ENCODE measurements at regions of chr1 and their contacts with region 1.

Region 1: GRCh38 chr1:99180343-99180808 is 83.9 kb upstream of the PLPPR4 start:
- DNase-seq: peak; percentile 90
- ATAC-seq: peak; percentile 79
- H3K4me3 ChIP-seq: no peak overlapping the region
- H3K27ac ChIP-seq: no peak overlapping the region
- H3K4me1 ChIP-seq: peaks cover 13% of the 10 kb centered on the region
- H3K27me3 ChIP-seq: no peaks in the 10 kb centered on the region
- CTCF ChIP-seq: peak; percentile 92

Region 2: GRCh38 chr1:98794196-98794886 is 386.0 kb before region 1 on chr1:
- CTCF ChIA-PET with region 1: no interaction called
- POLR2A ChIA-PET with region 1: no interaction called
- intact Hi-C with region 1: loop called (anchors 2 kb)
- DNase-seq: peak; percentile 88
- ATAC-seq: peak; percentile 68
- H3K4me3 ChIP-seq: no peak overlapping the region
- H3K27ac ChIP-seq: no peak overlapping the region
- H3K4me1 ChIP-seq: peaks cover 32% of the 10 kb centered on the region
- H3K27me3 ChIP-seq: no peaks in the 10 kb centered on the region
- CTCF ChIP-seq: peak; percentile 91

Region 3: DNA sequence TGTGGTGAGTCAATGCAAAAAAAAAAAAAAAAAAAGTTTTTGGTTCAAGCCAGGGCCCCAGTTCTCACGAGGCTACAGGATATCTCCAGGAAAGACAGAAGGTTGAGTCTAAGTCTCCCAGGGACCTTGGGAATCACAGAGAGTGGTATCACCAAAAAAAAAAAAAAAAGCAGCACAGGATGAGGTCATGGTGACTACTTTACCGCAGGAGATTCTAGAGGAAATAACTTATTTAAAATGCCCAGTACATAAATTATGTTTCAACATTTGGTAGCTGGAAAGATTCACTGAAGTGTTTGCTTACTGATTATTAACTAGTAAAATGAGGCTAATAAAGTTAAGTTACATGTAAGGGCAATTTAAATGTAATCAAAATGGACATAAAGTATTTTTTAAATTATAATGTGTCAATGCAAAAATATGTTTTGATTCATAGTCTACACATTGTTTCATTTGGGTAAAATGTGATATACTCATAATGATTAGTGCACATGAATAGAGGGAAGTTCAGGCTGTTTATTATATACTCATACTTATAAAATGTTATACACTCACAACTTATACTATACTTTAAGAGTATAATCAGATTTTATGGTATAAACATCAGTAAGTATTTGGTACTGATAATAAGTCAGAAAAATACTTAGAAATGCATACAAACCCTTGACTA is 259.8 kb before region 1 on chr1:
- CTCF ChIA-PET with region 1: no interaction called
- POLR2A ChIA-PET with region 1: no interaction called
- intact Hi-C with region 1: loop called (anchors 1 kb)
- DNase-seq: peak; percentile 85
- ATAC-seq: peak; percentile 52
- H3K4me3 ChIP-seq: peak overlapping the region; percentile 59
- H3K27ac ChIP-seq: peak overlapping the region; percentile 99
- H3K4me1 ChIP-seq: peaks cover 89% of the 10 kb centered on the region
- H3K27me3 ChIP-seq: no peaks in the 10 kb centered on the region
- CTCF ChIP-seq: no peak

Region 4: GRCh38 chr1:99207216-99207615 is 26.8 kb after region 1 on chr1:
- CTCF ChIA-PET with region 1: no interaction called
- POLR2A ChIA-PET with region 1: no interaction called
- intact Hi-C with region 1: no loop called
- DNase-seq: peak; percentile 23
- ATAC-seq: peak; percentile 38
- H3K4me3 ChIP-seq: no peak overlapping the region
- H3K27ac ChIP-seq: no peak overlapping the region
- H3K4me1 ChIP-seq: no peaks in the 10 kb centered on the region
- H3K27me3 ChIP-seq: no peaks in the 10 kb centered on the region
- CTCF ChIP-seq: no peak

Region 5: GRCh38 chr1:99481391-99481996 is 301.1 kb after region 1 on chr1:
- CTCF ChIA-PET with region 1: interaction called, 3 read pairs
- POLR2A ChIA-PET with region 1: no interaction called
- intact Hi-C with region 1: loop called (anchors 1 kb)
- DNase-seq: peak; percentile 83
- ATAC-seq: peak; percentile 79
- H3K4me3 ChIP-seq: no peak overlapping the region
- H3K27ac ChIP-seq: no peak overlapping the region
- H3K4me1 ChIP-seq: no peaks in the 10 kb centered on the region
- H3K27me3 ChIP-seq: no peaks in the 10 kb centered on the region
- CTCF ChIP-seq: peak; percentile 94

Region 6: DNA sequence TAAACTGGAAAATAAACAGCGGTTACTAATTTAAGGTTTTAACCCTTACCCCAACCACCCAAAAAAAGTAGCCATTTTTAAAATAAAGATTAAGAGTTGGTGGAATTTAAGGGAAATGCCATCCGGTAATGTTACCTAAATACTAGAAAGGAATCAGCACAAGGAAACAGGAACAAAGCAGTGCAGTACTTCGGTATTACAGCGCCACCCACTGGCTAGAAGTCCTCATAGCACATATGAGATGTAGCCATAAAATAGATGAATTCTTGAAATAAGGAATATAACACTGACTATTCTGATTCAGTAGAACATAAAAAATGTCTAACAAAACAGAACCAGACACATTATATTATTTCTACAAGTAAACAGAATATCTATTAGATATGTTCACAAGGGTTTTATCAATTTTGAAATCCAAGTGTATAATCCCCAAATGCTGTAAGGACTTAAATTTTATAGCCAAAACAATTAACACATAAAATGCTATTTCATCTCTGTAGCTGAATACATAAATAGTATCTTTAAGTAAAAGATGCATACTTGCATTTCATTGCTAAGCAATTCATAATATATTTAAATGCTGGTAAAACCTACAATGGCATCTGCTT is 527.3 kb after region 1 on chr1:
- CTCF ChIA-PET with region 1: no interaction called
- POLR2A ChIA-PET with region 1: no interaction called
- intact Hi-C with region 1: loop called (anchors 1 kb)
- DNase-seq: peak; percentile 81
- ATAC-seq: peak; percentile 77
- H3K4me3 ChIP-seq: no peak overlapping the region
- H3K27ac ChIP-seq: no peak overlapping the region
- H3K4me1 ChIP-seq: no peaks in the 10 kb centered on the region
- H3K27me3 ChIP-seq: no peaks in the 10 kb centered on the region
- CTCF ChIP-seq: peak; percentile 96

Measured in PC-3 (cell line).